ENCODE measurements at regions of chr19 and their contacts with region 1.

Region 1: DNA sequence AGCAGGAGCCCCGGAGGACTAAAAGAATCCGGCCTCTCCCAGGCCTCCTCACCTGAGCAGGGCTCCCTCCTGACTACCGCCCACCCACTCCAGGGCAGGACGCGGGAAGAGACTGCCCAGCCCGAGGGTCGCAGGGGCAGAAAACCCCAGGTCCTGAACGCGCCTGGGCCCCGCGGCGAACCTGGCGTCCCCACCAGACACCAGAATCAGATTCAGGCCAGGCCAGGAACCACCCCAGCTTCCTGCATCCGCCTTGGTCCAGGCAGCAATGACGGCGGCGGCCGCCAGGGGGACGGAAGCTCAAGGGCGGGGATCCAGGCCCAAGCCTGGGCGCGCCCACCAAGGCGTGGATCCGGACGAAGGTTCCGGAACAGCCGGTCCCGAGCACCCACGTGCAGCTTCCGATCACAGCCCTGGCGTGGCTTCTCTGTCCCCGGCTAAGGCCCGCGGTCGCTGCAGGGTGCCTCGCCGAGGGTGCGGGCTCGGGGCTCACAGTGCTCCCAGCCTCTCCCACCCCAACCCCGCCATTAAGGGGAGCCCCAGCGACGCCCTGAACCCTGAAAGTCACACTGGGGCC is 3.6 kb downstream of the LGALS7 start:
- DNase-seq: no peak
- H3K4me3 ChIP-seq: peak overlapping the region in 1 of 3 experiments; percentile 23
- H3K27ac ChIP-seq: no peak overlapping the region
- H3K4me1 ChIP-seq: peaks cover 17% of the 10 kb centered on the region
- H3K27me3 ChIP-seq: no peaks in the 10 kb centered on the region
- CTCF ChIP-seq: peak; percentile 70 to 84

Region 2: DNA sequence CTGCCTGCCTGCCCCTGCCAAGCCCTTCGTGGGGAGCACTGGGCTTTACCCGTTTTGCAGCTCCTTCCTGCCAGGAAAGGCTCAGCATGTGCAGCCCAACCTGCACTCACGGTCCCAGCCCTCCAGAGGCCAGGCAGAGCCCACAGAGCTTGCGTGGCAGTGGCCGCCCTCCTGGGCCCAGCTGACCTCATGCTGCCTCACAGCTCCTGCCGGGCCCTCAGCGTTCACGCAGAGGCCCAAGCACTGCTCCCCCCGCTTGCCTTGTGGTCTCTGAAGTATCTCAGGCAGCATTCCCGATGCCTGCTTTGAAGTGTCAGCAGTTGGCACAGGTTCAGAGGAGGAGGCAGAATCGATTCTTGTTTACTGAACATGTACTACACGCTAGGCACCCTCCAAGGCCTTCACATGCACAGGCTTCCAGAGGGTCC is 58.0 kb before region 1 on chr19:
- CTCF ChIA-PET with region 1: no interaction called
- dilution Hi-C with region 1: loop called (anchors 5 kb)
- in situ Hi-C with region 1: no loop called
- intact Hi-C with region 1: no loop called
- DNase-seq: peak; percentile 83
- H3K4me3 ChIP-seq: no peak overlapping the region
- H3K27ac ChIP-seq: peak overlapping the region; percentile 7
- H3K4me1 ChIP-seq: peaks cover 52% of the 10 kb centered on the region
- H3K27me3 ChIP-seq: no peaks in the 10 kb centered on the region
- CTCF ChIP-seq: peak in 1 of 2 donors; percentile 9

Region 3: GRCh38 chr19:38799071-38799744 is 29.5 kb after region 1 on chr19:
- CTCF ChIA-PET with region 1: no interaction called
- dilution Hi-C with region 1: loop called (anchors 5 kb)
- in situ Hi-C with region 1: no loop called
- intact Hi-C with region 1: no loop called
- DNase-seq: no peak
- H3K4me3 ChIP-seq: no peak overlapping the region
- H3K27ac ChIP-seq: peak overlapping the region; percentile 37
- H3K4me1 ChIP-seq: peaks cover 8% of the 10 kb centered on the region
- H3K27me3 ChIP-seq: no peaks in the 10 kb centered on the region
- CTCF ChIP-seq: no peak

Region 4: GRCh38 chr19:38831142-38831605 is 61.5 kb after region 1 on chr19:
- CTCF ChIA-PET with region 1: no interaction called
- dilution Hi-C with region 1: loop called (anchors 5 kb)
- in situ Hi-C with region 1: no loop called
- intact Hi-C with region 1: loop called (anchors 2 kb)
- DNase-seq: peak; percentile 86
- H3K4me3 ChIP-seq: peak overlapping the region; percentile 57 to 83 (median 60)
- H3K27ac ChIP-seq: peak overlapping the region; percentile 74
- H3K4me1 ChIP-seq: peaks cover 31% of the 10 kb centered on the region
- H3K27me3 ChIP-seq: no peaks in the 10 kb centered on the region
- CTCF ChIP-seq: no peak

Region 5: GRCh38 chr19:38919837-38920601 is 150.3 kb after region 1 on chr19:
- CTCF ChIA-PET with region 1: no interaction called
- dilution Hi-C with region 1: loop called (anchors 5 kb)
- in situ Hi-C with region 1: no loop called
- intact Hi-C with region 1: no loop called
- DNase-seq: no peak
- H3K4me3 ChIP-seq: no peak overlapping the region
- H3K27ac ChIP-seq: no peak overlapping the region
- H3K4me1 ChIP-seq: no peaks in the 10 kb centered on the region
- H3K27me3 ChIP-seq: no peaks in the 10 kb centered on the region
- CTCF ChIP-seq: no peak

Measured in mammary epithelial cell (primary cell).